ENCODE measurements at regions of chr3 and their contacts with region 1.

Region 1: GRCh38 chr3:47989981-47990440 is 26.2 kb downstream of the MAP4 start:
- DNase-seq: peak; percentile 80 to 95 (median 91)
- H3K4me3 ChIP-seq: no peak overlapping the region
- H3K27ac ChIP-seq: no peak overlapping the region
- H3K4me1 ChIP-seq: peaks cover 0 to 5% of the 10 kb centered on the region in 2 donors
- H3K27me3 ChIP-seq: no peaks in the 10 kb centered on the region
- CTCF ChIP-seq: peak; percentile 91 to 96 (median 94)
- POLR2A ChIP-seq: no peak

Region 2: DNA sequence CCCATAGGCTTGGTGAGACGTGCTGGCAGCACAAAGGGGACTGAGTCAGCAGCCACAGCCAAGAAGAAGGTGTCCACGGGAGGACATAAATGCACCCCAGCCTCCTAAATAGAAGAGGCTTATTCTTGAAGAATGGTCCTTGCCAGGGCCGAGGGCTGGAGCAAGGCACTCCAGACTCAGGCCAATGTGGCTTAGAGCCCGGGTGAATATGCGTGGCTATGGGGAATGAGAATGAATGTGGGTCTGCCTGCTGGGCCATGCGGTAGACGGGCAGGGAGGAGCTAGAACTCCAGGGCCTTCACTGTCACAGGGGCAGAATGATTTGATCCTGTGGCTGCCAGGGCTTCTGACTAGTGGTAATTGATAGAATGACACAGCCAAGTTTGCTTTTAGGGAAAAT is 153.0 kb before region 1 on chr3:
- intact Hi-C with region 1: loop called (anchors 5 to 10 kb)
- DNase-seq: no peak
- H3K4me3 ChIP-seq: no peak overlapping the region
- H3K27ac ChIP-seq: no peak overlapping the region
- H3K4me1 ChIP-seq: no peaks in the 10 kb centered on the region
- H3K27me3 ChIP-seq: no peaks in the 10 kb centered on the region
- CTCF ChIP-seq: no peak
- POLR2A ChIP-seq: no peak

Region 3: GRCh38 chr3:47849699-47850563 is 140.1 kb before region 1 on chr3:
- intact Hi-C with region 1: loop called in 1 of 2 experiments (anchors 10 kb)
- DNase-seq: no peak
- H3K4me3 ChIP-seq: no peak overlapping the region
- H3K27ac ChIP-seq: no peak overlapping the region
- H3K4me1 ChIP-seq: no peaks in the 10 kb centered on the region
- H3K27me3 ChIP-seq: no peaks in the 10 kb centered on the region
- CTCF ChIP-seq: peak in 5 of 6 experiments; percentile 22 to 42 (median 25)
- POLR2A ChIP-seq: no peak

Region 4: DNA sequence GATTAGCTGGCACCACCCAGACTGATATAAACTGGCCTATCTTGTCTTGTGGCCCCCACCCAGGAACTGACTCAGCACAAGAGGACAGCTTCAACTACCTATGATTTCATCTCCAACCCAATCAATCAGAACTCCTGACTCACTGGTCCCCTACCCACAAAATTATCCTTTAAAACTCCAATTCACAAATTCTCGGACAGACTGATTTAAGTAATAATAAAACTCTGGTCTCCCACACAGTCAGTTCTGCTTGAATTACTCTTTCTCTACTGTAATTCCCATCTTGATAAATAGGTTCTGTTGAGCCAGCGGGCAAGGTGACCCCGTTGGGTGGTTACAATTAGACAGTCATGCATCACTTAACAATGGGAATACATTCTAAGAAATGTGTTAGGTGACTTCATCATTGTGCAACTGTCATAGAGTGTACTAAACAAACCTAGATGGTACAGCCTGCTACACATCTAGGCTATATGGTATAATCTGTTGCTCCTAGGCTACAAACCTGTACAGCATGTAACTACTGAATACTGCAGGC is 74.3 kb after region 1 on chr3:
- intact Hi-C with region 1: no loop called
- DNase-seq: no peak
- H3K4me3 ChIP-seq: no peak overlapping the region
- H3K27ac ChIP-seq: no peak overlapping the region
- H3K4me1 ChIP-seq: peaks cover 0 to 26% of the 10 kb centered on the region in 2 donors
- H3K27me3 ChIP-seq: no peaks in the 10 kb centered on the region
- CTCF ChIP-seq: no peak
- POLR2A ChIP-seq: no peak

Region 5: DNA sequence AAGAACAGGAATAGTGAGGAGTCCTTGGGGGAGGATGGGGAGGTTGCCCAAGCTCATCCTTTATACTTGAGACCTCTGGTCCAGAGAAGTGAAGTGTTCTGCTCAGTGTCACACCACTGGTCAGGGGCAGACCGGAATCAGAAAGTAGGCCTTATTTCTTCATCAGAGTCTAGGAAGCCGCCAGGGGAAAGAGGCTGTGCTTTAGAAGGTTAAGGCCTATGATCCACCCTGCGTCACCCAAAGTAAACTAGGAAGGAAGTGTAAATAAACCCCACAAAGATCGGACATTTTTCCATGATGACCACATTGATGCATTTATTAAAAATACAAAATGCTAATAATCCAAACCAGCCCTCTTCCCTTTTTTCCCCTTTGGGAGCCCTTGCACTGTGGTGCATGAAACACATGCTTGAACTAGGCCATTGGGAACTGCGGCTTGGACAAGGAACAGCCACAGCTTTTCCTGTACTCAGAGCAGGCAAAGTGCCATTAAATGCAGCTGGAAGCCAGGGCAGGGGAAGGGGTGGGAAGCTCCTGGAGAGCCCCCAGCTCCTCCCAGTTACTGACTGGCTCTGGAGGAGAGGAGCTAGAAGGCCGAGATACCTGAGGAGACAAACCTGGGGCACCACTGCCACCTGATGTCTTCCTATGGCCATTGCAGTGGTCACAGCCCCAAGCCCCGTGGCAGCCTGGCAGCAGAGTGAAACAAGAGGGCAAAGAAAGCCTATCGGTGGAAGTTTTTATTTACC is 161.2 kb after region 1 on chr3:
- intact Hi-C with region 1: loop called (anchors 5 to 10 kb)
- DNase-seq: peak; percentile 70 to 92 (median 86)
- H3K4me3 ChIP-seq: no peak overlapping the region
- H3K27ac ChIP-seq: peak overlapping the region in 2 of 5 donors; percentile 54 to 65
- H3K4me1 ChIP-seq: peaks cover 0 to 8% of the 10 kb centered on the region in 2 donors
- H3K27me3 ChIP-seq: no peaks in the 10 kb centered on the region
- CTCF ChIP-seq: peak; percentile 62 to 91 (median 84)
- POLR2A ChIP-seq: no peak